Panc1 (cell line): ENCODE measurements at regions of chr7 and their contacts with region 1.

Region 1: DNA sequence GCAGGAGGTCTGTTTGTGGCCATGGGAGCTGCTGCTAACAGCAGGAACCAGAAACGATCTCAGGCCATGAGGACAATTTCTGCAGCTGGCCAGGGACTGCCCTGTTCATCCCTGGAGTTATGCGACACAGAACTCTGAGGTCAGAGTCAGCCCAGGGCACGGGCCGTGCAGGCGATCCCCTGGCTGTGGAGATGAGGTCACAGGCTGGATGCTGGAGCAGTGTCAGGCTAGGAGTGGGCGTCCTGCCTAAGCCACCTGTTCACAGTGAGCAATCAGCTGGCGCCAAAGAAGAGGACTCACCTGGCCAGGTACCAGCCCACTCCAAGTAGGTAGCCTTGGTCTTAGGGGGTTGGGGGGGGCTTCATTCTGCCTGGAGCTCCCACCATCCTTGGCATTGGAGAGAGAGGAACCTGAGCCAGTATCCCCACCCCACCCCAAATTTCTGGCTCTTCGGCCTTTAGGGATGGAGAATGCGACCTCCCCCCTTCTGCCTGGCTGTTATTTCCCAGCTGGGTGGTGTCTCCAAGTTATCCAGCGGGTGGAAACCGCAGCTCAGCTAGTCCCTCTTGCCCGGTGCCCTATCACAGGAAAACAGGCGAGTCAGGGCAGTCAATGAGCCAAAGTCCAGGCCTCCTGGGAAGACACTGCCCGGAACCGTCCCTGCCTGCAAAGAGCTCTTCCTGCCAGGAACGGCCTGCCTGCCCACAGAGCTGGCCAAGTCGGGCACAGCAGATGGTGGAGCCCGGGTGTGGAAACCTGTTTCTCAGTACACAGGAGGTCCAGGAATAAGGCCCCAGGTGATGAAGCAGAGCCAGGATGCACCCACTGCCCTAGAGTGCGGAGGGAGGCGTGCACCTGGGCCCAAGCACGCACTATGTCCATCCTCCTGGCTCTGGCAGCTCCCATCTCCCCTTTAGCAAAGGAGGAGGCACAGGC is 1.8 kb upstream of the TTYH3 start:
- DNase-seq: no peak
- ATAC-seq: no peak
- H3K4me3 ChIP-seq: no peak overlapping the region
- H3K27ac ChIP-seq: no peak overlapping the region
- H3K4me1 ChIP-seq: peaks cover 16% of the 10 kb centered on the region
- H3K27me3 ChIP-seq: no peaks in the 10 kb centered on the region
- CTCF ChIP-seq: no peak

Region 2: GRCh38 chr7:2597273-2597640 is 32.8 kb before region 1 on chr7:
- CTCF ChIA-PET with region 1: no interaction called
- POLR2A ChIA-PET with region 1: no interaction called
- in situ Hi-C with region 1: no loop called
- intact Hi-C with region 1: no loop called
- DNase-seq: no peak
- ATAC-seq: no peak
- H3K4me3 ChIP-seq: no peak overlapping the region
- H3K27ac ChIP-seq: no peak overlapping the region
- H3K4me1 ChIP-seq: no peaks in the 10 kb centered on the region
- H3K27me3 ChIP-seq: no peaks in the 10 kb centered on the region
- CTCF ChIP-seq: no peak

Region 3: DNA sequence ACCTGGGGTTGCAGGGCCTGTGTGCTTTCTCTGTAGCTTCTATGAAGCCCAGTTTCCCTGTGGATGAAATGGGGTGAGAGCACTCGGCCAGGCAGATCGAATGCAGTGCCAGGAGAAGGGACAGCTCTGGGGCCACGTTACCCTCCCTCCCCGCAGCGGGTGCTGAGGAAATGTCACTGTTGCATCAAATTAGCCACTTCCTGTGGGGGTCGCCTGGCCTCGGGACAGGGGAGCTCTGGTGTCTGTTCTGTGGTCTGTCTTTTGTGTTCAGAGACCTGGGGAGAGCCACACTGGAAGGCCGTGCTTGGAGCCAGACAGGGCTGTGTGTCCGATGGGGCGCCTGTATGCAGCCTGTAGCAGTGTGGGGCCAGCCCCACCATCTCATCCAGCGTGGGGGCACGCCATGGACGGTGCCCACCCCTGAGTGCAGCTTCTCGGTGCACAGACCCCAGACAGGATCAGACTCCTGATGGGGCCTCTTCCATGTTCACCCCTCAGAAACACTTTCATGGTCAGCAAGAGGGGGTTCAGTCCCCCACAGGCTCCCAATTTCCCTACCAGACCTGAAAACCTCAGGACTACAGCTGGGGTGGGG is 15.4 kb after region 1 on chr7:
- CTCF ChIA-PET with region 1: interaction called, 15 read pairs
- POLR2A ChIA-PET with region 1: no interaction called
- in situ Hi-C with region 1: no loop called
- intact Hi-C with region 1: no loop called
- DNase-seq: no peak
- ATAC-seq: no peak
- H3K4me3 ChIP-seq: no peak overlapping the region
- H3K27ac ChIP-seq: peak overlapping the region; percentile 83
- H3K4me1 ChIP-seq: peaks cover 53% of the 10 kb centered on the region
- H3K27me3 ChIP-seq: no peaks in the 10 kb centered on the region
- CTCF ChIP-seq: no peak

Region 4: DNA sequence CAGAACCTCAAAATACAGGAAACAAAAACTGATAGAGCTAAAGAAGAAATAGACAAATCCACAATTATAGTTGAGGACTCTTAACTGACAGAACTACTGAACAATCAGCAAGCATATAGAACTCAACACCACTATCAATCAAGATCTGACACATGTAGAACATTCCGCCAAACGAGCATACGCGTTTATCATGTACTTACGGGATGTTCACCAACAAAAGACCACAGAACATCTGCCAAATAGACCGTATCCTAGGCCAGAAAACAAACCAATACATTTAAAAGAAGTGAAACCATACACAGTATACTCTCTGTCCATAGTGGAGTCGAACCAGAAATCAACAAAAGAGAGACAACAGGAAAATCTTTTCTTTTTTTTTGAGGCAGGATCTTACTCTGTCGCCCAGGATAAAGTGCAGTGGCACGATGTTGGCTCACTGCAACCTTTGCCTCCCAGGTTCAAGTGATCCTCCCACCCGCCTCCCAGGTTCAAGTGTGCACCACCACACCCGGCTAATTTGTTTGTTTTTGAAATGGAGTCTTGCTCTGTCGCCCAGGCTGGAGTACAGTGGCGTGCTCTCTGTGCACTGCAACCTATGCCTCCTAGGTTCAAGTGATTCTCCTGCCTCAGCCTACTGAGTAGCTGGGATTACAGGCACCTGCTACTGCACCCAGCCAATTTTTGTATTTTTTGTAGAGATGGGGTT is 209.0 kb after region 1 on chr7:
- CTCF ChIA-PET with region 1: no interaction called
- POLR2A ChIA-PET with region 1: no interaction called
- in situ Hi-C with region 1: no loop called
- intact Hi-C with region 1: no loop called
- DNase-seq: no peak
- ATAC-seq: no peak
- H3K4me3 ChIP-seq: no peak overlapping the region
- H3K27ac ChIP-seq: peak overlapping the region; percentile 15; the same call in 1 of the 2 replicates
- H3K4me1 ChIP-seq: peaks cover 45% of the 10 kb centered on the region
- H3K27me3 ChIP-seq: no peaks in the 10 kb centered on the region
- CTCF ChIP-seq: no peak